WTC11 (cell line): ENCODE measurements at regions of chr2 and their contacts with region 1.

Region 1: DNA sequence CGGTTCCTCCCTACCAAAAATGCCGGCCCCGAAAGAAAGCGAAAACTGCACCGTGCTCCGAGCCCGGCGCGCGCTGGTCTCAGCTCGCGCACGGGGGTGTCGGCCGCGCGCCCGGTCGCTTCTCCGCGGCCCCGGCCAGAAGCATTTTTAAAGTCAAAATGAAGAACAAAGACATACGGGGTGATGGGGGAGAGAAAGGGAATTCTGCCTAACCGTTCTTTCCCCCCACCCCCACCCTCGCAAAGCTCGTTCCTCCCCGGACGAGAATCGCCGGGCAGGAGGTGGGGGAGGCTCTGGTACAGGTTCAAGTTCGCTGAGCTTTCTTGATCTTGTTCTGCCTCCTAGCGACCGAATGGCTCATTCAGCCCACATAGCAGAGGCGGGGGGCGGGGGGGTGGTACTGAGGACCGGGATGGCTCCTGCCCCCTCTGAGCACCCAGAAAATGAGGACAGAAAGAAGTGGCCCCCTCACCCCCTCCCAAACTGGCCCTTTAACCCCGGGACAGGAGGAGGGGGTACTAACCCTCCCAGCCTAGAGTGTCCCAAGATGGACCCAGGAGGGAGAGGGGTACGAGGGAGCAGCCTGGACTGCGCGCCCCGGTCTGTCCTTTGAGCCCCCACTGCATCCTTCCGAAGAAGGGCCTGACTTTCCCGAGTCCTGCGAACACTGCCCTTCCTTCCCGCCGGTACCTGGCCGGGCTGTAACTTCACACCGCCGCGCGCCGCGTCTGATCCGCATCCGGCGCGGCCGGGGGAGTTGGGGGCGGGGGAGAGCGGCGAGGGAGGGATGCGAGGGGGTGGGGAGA is 3.1 kb downstream of the BCL11A start:
- DNase-seq: peak; percentile 80
- ATAC-seq: peak; percentile 47
- H3K4me3 Mint-ChIP-seq: peak overlapping the region; percentile 91
- H3K27ac Mint-ChIP-seq: peak overlapping the region; percentile 93
- H3K4me1 Mint-ChIP-seq: peaks cover 36% of the 10 kb centered on the region
- H3K27me3 Mint-ChIP-seq: no peaks in the 10 kb centered on the region
- CTCF ChIP-seq: peak; percentile 30; the same call in 1 of the 2 replicates

Region 2: GRCh38 chr2:60337140-60337494 is 213.3 kb before region 1 on chr2:
- CTCF ChIA-PET with region 1: interaction called, 27 read pairs
- POLR2A ChIA-PET with region 1: interaction called, 4 read pairs
- DNase-seq: peak; percentile 52
- ATAC-seq: peak; percentile 88
- H3K4me3 Mint-ChIP-seq: no peak overlapping the region
- H3K27ac Mint-ChIP-seq: no peak overlapping the region
- H3K4me1 Mint-ChIP-seq: peaks cover 10% of the 10 kb centered on the region
- H3K27me3 Mint-ChIP-seq: no peaks in the 10 kb centered on the region; the same call in 1 of the 2 replicates
- CTCF ChIP-seq: no peak

Region 3: GRCh38 chr2:60507211-60507965 is 43.0 kb before region 1 on chr2:
- CTCF ChIA-PET with region 1: interaction called, 20 read pairs
- POLR2A ChIA-PET with region 1: interaction called, 5 read pairs
- DNase-seq: no peak
- ATAC-seq: no peak
- H3K4me3 Mint-ChIP-seq: no peak overlapping the region
- H3K27ac Mint-ChIP-seq: peak overlapping the region; percentile 82
- H3K4me1 Mint-ChIP-seq: peaks cover 84% of the 10 kb centered on the region
- H3K27me3 Mint-ChIP-seq: no peaks in the 10 kb centered on the region
- CTCF ChIP-seq: no peak

Region 4: GRCh38 chr2:60560734-60561644 is 10.6 kb after region 1 on chr2:
- CTCF ChIA-PET with region 1: interaction called, 20 read pairs
- POLR2A ChIA-PET with region 1: no interaction called
- DNase-seq: no peak
- ATAC-seq: peak; percentile 71
- H3K4me3 Mint-ChIP-seq: no peak overlapping the region
- H3K27ac Mint-ChIP-seq: no peak overlapping the region
- H3K4me1 Mint-ChIP-seq: peaks cover 31% of the 10 kb centered on the region
- H3K27me3 Mint-ChIP-seq: peaks cover 19% of the 10 kb centered on the region
- CTCF ChIP-seq: peak; percentile 39; the same call in 1 of the 2 replicates

Region 5: GRCh38 chr2:60581433-60582282 is 31.3 kb after region 1 on chr2:
- CTCF ChIA-PET with region 1: interaction called, 19 read pairs
- POLR2A ChIA-PET with region 1: interaction called, 6 read pairs
- DNase-seq: peak; percentile 76
- ATAC-seq: peak; percentile 88
- H3K4me3 Mint-ChIP-seq: peak overlapping the region; percentile 67
- H3K27ac Mint-ChIP-seq: no peak overlapping the region
- H3K4me1 Mint-ChIP-seq: peaks cover 9% of the 10 kb centered on the region
- H3K27me3 Mint-ChIP-seq: peaks cover 41% of the 10 kb centered on the region
- CTCF ChIP-seq: peak; percentile 95

Region 6: GRCh38 chr2:60818272-60818671 is 267.9 kb after region 1 on chr2:
- CTCF ChIA-PET with region 1: no interaction called
- POLR2A ChIA-PET with region 1: no interaction called
- DNase-seq: no peak
- ATAC-seq: no peak; the same call in 1 of the 2 replicates
- H3K4me3 Mint-ChIP-seq: no peak overlapping the region
- H3K27ac Mint-ChIP-seq: no peak overlapping the region
- H3K4me1 Mint-ChIP-seq: 0 out of 2 replicates have a peak, but pooled peaks cover 3% of the 10 kb centered on the region
- H3K27me3 Mint-ChIP-seq: no peaks in the 10 kb centered on the region
- CTCF ChIP-seq: no peak